Right lobe of liver (tissue), 6 donors: ENCODE measurements at regions of chr11 and their contacts with region 1.

Region 1: DNA sequence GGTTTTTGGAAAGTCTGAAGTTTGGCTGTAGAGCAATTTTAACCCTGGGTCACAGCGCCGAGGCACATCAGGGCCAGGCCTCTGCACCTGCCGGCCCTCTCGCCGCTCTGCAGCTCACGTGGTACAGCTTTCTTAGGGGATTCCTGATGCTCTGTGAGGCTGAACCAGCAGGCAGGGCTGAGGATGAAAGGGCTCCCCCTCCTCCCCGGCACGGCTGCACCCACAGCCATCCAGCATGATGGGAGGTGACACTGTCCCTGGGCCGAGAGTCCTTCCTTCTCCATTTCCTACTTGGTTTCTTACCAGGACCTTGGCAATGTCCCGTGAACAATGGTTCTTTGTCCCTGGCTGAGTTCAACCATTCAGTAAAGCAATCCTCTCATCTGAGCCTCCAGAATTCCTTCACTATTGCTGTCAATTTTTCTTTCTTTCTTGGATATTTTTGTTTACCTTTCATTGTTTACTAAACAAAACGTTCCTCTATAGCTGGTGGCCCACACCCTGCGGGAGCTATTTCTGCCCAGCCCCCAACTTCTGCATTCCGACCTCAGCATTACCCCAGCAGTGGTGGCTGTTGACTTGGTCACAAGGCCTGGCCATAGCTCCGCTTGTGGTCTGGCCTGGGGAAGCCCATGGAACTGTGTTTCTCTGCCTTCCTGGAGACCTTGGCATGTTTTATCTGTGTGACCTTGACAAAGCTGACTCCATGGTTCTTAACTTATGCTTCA is 172.8 kb upstream of the B3GAT1 start:
- DNase-seq: no peak
- ATAC-seq: peak in 2 of 4 donors; percentile 33 to 48
- H3K4me3 ChIP-seq: no peak overlapping the region
- H3K27ac ChIP-seq: no peak overlapping the region
- H3K4me1 ChIP-seq: no peaks in the 10 kb centered on the region
- H3K27me3 ChIP-seq: no peaks in the 10 kb centered on the region
- CTCF ChIP-seq: no peak
- POLR2A ChIP-seq: no peak

Region 2: GRCh38 chr11:134261626-134262488 is 323.0 kb before region 1 on chr11:
- intact Hi-C with region 1: no loop called
- DNase-seq: no peak
- ATAC-seq: peak; percentile 61 to 77 (median 72)
- H3K4me3 ChIP-seq: no peak overlapping the region
- H3K27ac ChIP-seq: no peak overlapping the region
- H3K4me1 ChIP-seq: no peaks in the 10 kb centered on the region
- H3K27me3 ChIP-seq: no peaks in the 10 kb centered on the region
- CTCF ChIP-seq: peak; percentile 41 to 55 (median 54)
- POLR2A ChIP-seq: no peak

Region 3: DNA sequence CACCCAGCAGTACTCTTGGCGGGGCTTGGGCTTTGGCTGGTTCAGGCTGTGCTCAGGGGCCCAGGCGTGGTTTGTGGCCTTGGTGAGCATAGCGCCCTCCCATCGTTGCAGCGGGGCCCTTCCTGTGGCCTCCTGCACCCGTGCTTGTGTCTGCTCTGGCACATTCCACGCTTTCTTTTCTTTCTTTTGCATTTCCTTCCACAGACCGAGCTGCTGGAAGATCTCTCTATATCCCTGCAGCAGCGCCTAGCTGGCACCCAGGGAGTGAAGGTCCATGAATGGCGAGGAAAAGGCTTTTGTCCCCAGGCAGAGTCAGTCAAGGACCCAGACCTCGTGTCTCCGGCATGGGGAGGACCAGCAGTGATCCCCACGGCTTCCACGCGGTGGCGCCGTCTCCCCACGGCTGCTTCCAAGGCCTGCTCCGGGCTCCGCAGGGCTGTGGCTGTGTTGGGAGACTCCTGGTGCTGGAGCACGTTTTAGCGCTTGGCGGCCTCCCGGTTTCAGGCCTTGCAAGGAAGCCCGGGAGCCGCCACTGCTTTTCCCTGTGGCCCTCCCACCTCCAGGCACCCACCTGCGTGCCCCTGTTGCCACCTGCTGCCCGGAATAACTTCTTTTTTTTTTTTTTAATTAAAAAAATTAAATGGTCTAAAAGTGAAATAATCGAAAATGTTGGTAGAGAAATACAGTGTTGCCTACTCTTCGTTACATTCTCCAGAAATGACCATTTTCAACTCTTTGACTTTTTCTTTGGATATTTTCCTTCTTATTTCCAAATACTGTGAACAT is 224.6 kb before region 1 on chr11:
- intact Hi-C with region 1: loop called in 1 of 2 experiments (anchors 10 kb)
- DNase-seq: peak; percentile 85 to 86 (median 86)
- ATAC-seq: peak; percentile 98 to 100 (median 99)
- H3K4me3 ChIP-seq: no peak overlapping the region
- H3K27ac ChIP-seq: no peak overlapping the region
- H3K4me1 ChIP-seq: no peaks in the 10 kb centered on the region
- H3K27me3 ChIP-seq: no peaks in the 10 kb centered on the region
- CTCF ChIP-seq: peak; percentile 92 to 94 (median 93)
- POLR2A ChIP-seq: no peak

Region 4: GRCh38 chr11:134666273-134667174 is 81.7 kb after region 1 on chr11:
- intact Hi-C with region 1: no loop called
- DNase-seq: no peak
- ATAC-seq: no peak
- H3K4me3 ChIP-seq: no peak overlapping the region
- H3K27ac ChIP-seq: no peak overlapping the region
- H3K4me1 ChIP-seq: no peaks in the 10 kb centered on the region
- H3K27me3 ChIP-seq: no peaks in the 10 kb centered on the region
- CTCF ChIP-seq: no peak
- POLR2A ChIP-seq: no peak

Region 5: DNA sequence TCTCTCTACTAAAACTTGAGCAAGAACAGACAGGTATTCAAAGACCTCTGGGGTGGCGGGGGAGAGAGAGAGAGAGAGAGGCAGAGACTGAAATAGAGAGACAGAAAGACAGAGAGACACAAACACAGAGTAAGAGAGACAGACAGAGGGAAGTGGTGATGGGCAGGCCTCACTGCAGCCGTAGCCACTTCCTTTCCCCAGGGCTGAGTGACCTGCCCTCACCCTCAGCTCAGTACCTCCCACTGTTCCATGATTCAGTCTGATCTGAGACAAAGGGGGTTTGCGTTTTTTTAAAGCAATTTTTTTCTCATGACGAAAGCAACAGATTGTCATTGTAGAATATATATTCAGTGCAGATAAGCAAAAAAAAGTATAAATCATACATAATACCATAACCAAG is 435.0 kb after region 1 on chr11:
- intact Hi-C with region 1: no loop called
- DNase-seq: no peak
- ATAC-seq: peak in 2 of 4 donors; percentile 39 to 47
- H3K4me3 ChIP-seq: no peak overlapping the region
- H3K27ac ChIP-seq: no peak overlapping the region
- H3K4me1 ChIP-seq: no peaks in the 10 kb centered on the region
- H3K27me3 ChIP-seq: no peaks in the 10 kb centered on the region
- CTCF ChIP-seq: no peak
- POLR2A ChIP-seq: no peak